ENCODE measurements at regions of chr1 and their contacts with region 1.

Region 1: GRCh38 chr1:182781841-182782586 is 7.6 kb upstream of the NPL start:
- DNase-seq: peak; percentile 30
- ATAC-seq: peak; percentile 71
- H3K4me3 ChIP-seq: no peak overlapping the region
- H3K27ac ChIP-seq: no peak overlapping the region
- H3K4me1 ChIP-seq: no peaks in the 10 kb centered on the region
- H3K27me3 ChIP-seq: peaks cover 8% of the 10 kb centered on the region
- CTCF ChIP-seq: peak; percentile 71

Region 2: DNA sequence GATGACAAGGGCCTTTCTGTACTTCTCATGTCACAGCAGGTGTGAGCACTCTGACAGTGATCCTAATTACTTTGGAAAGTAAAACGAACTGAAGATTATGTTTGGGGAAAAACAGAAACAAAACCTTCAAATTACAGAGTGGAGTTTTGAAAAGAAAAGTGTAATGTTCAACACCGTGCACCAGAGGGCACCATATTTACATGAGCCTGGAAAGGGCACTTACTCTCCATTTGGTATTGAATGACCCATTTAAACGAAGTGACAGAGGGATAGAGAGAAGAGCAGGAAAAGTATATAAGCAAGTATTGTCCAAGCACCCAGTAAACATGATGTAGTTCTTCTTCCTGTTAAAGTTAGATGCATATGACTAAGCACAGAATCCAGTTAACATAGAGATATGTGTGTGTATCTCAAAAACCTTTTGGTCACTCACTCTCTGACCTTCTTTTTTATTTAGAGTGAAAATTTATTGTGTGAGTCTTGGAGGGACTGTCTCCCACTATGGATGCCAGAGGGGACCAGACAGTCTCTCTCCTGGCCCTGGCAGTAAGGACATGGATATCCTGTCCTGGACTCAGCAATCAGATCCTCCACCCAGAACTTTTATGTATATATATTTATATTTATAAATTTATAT is 335.9 kb before region 1 on chr1:
- CTCF ChIA-PET with region 1: interaction called, 4 read pairs
- POLR2A ChIA-PET with region 1: no interaction called
- in situ Hi-C with region 1: no loop called
- intact Hi-C with region 1: loop called (anchors 2 kb)
- DNase-seq: peak; percentile 30
- ATAC-seq: peak; percentile 75
- H3K4me3 ChIP-seq: no peak overlapping the region
- H3K27ac ChIP-seq: no peak overlapping the region
- H3K4me1 ChIP-seq: no peaks in the 10 kb centered on the region
- H3K27me3 ChIP-seq: no peaks in the 10 kb centered on the region
- CTCF ChIP-seq: peak; percentile 77

Region 3: GRCh38 chr1:182588500-182589452 is 193.2 kb before region 1 on chr1 and contains the start of gene RNASEL:
- CTCF ChIA-PET with region 1: interaction called, 16 read pairs
- POLR2A ChIA-PET with region 1: no interaction called
- in situ Hi-C with region 1: no loop called
- intact Hi-C with region 1: no loop called
- DNase-seq: no peak
- ATAC-seq: peak; percentile 98
- H3K4me3 ChIP-seq: peak within 1 kb of the TSS; percentile 51 to 93
- H3K27ac ChIP-seq: peak within 1 kb of the TSS; percentile 62
- H3K4me1 ChIP-seq: peaks cover 2% of the 10 kb centered on the region; the same call in 1 of the 2 replicates
- H3K27me3 ChIP-seq: no peaks in the 10 kb centered on the region
- CTCF ChIP-seq: no peak
- total RNA-seq, gene RNASEL: 1.2 TPM

Region 4: DNA sequence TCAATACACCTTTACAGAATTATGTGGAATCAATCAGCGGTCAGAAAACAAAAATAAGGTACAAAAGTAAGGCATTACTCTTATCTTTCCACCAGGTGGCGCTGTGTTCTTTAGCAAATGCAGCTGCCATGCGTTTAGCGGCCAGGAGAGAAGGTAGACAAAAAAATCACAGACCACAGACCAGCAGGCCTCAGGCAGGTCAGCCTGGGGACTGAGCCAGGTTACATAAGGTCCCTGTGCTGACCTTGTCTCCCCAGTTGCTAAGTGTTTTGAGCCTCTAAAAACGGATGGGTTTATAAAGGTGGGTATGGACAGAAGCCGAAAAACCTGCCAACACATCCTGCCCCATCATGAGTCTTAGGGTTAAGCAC is 180.6 kb before region 1 on chr1:
- CTCF ChIA-PET with region 1: interaction called, 16 read pairs
- POLR2A ChIA-PET with region 1: no interaction called
- in situ Hi-C with region 1: no loop called
- intact Hi-C with region 1: loop called (anchors 1 kb)
- DNase-seq: peak; percentile 22
- ATAC-seq: peak; percentile 49
- H3K4me3 ChIP-seq: no peak overlapping the region
- H3K27ac ChIP-seq: no peak overlapping the region
- H3K4me1 ChIP-seq: no peaks in the 10 kb centered on the region
- H3K27me3 ChIP-seq: peaks cover 11% of the 10 kb centered on the region
- CTCF ChIP-seq: peak; percentile 81

Region 5: DNA sequence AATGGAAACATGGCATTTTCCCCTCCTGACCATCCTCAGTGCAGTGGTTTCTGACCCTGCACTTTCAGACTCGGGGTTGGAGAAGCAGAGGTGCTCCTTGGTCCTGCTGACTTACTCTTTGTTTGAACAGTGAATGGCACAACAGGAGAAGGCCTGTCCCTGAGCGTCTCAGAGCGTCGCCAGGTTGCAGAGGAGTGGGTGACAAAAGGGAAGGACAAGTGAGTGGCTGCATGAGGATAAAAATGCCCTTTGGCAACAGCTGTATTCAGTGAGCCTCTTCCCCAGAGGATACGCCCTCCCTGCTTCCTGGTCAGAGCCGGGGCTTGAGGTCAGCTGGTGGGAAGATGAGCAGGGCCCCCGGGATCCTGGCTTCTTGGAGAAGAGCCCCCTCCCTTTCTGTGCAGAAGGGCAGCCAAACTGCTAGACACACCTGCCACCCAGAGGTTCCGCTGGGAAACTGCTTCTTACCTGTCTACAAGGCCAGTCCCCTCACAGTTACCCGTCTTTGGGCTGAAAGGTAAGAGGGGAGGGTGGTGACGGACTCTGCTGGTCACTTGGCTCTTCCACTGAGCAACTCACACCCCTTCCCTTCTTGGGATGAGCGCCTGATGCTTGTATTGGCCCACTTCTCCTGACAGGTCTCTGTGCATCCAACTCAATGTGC is 24.1 kb after region 1 on chr1:
- CTCF ChIA-PET with region 1: no interaction called
- POLR2A ChIA-PET with region 1: no interaction called
- in situ Hi-C with region 1: no loop called
- intact Hi-C with region 1: no loop called
- DNase-seq: no peak
- ATAC-seq: no peak
- H3K4me3 ChIP-seq: no peak overlapping the region
- H3K27ac ChIP-seq: no peak overlapping the region
- H3K4me1 ChIP-seq: no peaks in the 10 kb centered on the region
- H3K27me3 ChIP-seq: no peaks in the 10 kb centered on the region
- CTCF ChIP-seq: peak; percentile 23

Region 6: GRCh38 chr1:182917378-182917777 is 135.4 kb after region 1 on chr1:
- CTCF ChIA-PET with region 1: no interaction called
- POLR2A ChIA-PET with region 1: no interaction called
- in situ Hi-C with region 1: no loop called
- intact Hi-C with region 1: no loop called
- DNase-seq: no peak
- ATAC-seq: no peak
- H3K4me3 ChIP-seq: no peak overlapping the region
- H3K27ac ChIP-seq: no peak overlapping the region
- H3K4me1 ChIP-seq: no peaks in the 10 kb centered on the region
- H3K27me3 ChIP-seq: no peaks in the 10 kb centered on the region
- CTCF ChIP-seq: no peak